CD8-positive, alpha-beta T cell (primary cell): ENCODE measurements at regions of chr10 and their contacts with region 1.

Region 1: DNA sequence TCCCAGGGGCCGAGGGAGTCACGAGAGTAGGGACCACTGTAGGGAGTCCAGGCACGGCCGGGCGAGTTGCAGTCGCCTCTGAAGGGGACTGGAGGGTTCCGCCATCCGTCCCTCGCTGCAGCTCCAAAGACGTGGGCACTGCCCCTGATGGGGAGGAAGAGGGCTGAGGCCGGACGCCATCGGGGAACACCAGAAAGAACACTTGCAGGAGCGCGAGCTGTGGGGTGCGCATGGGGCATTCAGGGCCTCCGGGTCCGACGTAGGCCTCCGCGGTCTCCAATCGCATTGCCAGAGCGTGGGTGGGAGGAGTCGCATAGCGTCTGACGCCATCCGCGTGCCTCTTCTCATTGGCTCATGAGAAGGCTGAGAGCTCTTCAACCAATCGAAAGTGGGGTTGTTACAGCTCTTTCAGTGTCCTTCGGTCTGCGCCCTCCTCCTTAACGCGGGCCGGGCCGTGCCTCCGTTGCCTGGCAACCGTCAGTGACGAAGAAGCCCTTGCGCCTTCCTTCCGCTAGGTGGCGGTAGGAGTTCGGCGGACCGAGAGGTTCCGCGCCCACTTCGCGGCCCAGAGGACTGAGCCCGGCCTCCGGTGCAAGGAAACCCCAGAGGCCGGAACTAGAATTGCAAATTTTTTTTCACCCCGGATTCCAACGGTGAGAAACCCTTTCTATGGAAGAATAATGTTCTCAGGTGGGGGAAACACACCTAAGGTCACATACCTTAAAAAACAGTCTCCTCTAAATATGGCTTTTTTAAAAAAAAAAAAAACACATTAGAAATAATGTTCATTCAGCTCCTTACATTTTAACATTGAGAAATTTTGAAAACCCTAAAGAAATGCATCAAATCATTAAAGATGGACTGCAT is at the start of gene TCTN3:
- DNase-seq: peak; percentile 92 to 100 (median 95)
- ATAC-seq: peak; percentile 94
- H3K4me3 ChIP-seq: peak within 1 kb of the TSS; percentile 65 to 76
- H3K4me3 Mint-ChIP-seq: peak within 1 kb of the TSS; percentile 95
- H3K27ac ChIP-seq: peak within 1 kb of the TSS; percentile 87 to 89
- H3K27ac Mint-ChIP-seq: peak within 1 kb of the TSS; percentile 96
- H3K4me1 ChIP-seq: peaks cover 24% of the 10 kb centered on the region
- H3K4me1 Mint-ChIP-seq: peaks cover 41% of the 10 kb centered on the region
- H3K27me3 ChIP-seq: no peaks in the 10 kb centered on the region
- H3K27me3 Mint-ChIP-seq: peaks cover 3% of the 10 kb centered on the region
- CTCF ChIP-seq: peak; percentile 98
- total RNA-seq, gene TCTN3: 14.3 to 15.6 TPM

Region 2: GRCh38 chr10:95487994-95488393 is 205.9 kb before region 1 on chr10:
- CTCF ChIA-PET with region 1: no interaction called
- POLR2A ChIA-PET with region 1: no interaction called
- intact Hi-C with region 1: no loop called
- DNase-seq: no peak
- ATAC-seq: no peak
- H3K4me3 ChIP-seq: no peak overlapping the region
- H3K4me3 Mint-ChIP-seq: no peak overlapping the region
- H3K27ac ChIP-seq: no peak overlapping the region
- H3K27ac Mint-ChIP-seq: no peak overlapping the region
- H3K4me1 ChIP-seq: no peaks in the 10 kb centered on the region
- H3K4me1 Mint-ChIP-seq: no peaks in the 10 kb centered on the region
- H3K27me3 ChIP-seq: peaks cover 0 to 3% of the 10 kb centered on the region in 2 experiments
- H3K27me3 Mint-ChIP-seq: no peaks in the 10 kb centered on the region
- CTCF ChIP-seq: no peak

Region 3: GRCh38 chr10:95656291-95657164 is 37.4 kb before region 1 on chr10 and contains the start of gene ALDH18A1:
- CTCF ChIA-PET with region 1: interaction called, 7 read pairs
- POLR2A ChIA-PET with region 1: interaction called, 8 read pairs
- intact Hi-C with region 1: loop called (anchors 1 to 2 kb)
- DNase-seq: peak; percentile 85 to 97 (median 91)
- ATAC-seq: peak; percentile 95
- H3K4me3 ChIP-seq: peak within 1 kb of the TSS; percentile 79 to 82
- H3K4me3 Mint-ChIP-seq: peak within 1 kb of the TSS; percentile 99
- H3K27ac ChIP-seq: peak within 1 kb of the TSS; percentile 40 to 52
- H3K27ac Mint-ChIP-seq: peak within 1 kb of the TSS; percentile 84
- H3K4me1 ChIP-seq: peaks cover 13% of the 10 kb centered on the region
- H3K4me1 Mint-ChIP-seq: peaks cover 29% of the 10 kb centered on the region
- H3K27me3 ChIP-seq: no peaks in the 10 kb centered on the region
- H3K27me3 Mint-ChIP-seq: no peaks in the 10 kb centered on the region
- CTCF ChIP-seq: no peak
- total RNA-seq, gene ALDH18A1: 8.3 to 11.4 TPM

Region 4: DNA sequence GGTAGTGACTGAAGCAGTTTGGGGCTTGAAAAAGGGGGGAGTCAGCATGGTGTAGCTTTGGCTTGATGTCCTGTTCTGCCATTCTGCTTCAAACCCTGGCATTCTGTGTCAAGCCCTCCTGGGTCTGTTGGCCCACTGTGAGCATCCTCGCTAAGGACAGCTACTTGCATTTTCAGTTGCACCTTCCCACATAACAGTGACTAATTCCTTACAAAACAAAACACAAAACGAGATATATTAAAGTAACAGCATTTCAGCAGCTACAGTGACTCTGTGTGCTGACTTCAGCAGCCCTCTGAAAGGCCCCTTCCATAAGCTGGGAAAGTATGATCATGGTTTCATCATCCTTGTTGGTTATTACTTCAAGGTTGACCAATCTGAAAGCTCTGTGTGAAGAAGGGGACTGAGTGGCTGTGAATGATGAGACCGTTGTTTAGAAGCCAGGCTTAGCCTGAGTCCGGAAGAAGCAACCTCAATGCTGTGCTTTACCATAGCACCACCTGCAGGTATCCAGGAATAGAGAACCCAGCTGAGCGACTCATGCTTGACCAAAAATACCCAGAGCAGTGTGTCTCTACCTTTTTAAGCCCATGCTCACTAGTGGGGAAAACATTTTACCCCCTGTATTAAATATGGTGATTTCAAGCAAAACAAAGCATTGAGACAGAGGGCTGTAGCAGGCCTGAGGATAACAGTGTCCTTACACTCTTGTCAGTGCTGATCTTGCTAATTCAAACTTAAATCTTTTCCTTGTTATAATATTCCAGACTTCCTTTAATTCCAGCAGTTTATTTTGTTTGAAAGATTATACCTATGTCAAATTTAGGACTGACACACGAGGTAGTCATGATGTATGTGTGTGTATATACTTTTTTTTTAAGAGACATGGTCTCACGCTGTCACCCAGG is 171.3 kb after region 1 on chr10:
- CTCF ChIA-PET with region 1: interaction called, 24 read pairs
- POLR2A ChIA-PET with region 1: interaction called, 6 read pairs
- intact Hi-C with region 1: loop called (anchors 1 kb)
- DNase-seq: peak in 7 of 9 experiments; percentile 2 to 73 (median 24)
- ATAC-seq: peak; percentile 90
- H3K4me3 ChIP-seq: no peak overlapping the region
- H3K4me3 Mint-ChIP-seq: no peak overlapping the region
- H3K27ac ChIP-seq: no peak overlapping the region
- H3K27ac Mint-ChIP-seq: no peak overlapping the region
- H3K4me1 ChIP-seq: no peaks in the 10 kb centered on the region
- H3K4me1 Mint-ChIP-seq: no peaks in the 10 kb centered on the region
- H3K27me3 ChIP-seq: no peaks in the 10 kb centered on the region
- H3K27me3 Mint-ChIP-seq: no peaks in the 10 kb centered on the region
- CTCF ChIP-seq: peak; percentile 30

Region 5: DNA sequence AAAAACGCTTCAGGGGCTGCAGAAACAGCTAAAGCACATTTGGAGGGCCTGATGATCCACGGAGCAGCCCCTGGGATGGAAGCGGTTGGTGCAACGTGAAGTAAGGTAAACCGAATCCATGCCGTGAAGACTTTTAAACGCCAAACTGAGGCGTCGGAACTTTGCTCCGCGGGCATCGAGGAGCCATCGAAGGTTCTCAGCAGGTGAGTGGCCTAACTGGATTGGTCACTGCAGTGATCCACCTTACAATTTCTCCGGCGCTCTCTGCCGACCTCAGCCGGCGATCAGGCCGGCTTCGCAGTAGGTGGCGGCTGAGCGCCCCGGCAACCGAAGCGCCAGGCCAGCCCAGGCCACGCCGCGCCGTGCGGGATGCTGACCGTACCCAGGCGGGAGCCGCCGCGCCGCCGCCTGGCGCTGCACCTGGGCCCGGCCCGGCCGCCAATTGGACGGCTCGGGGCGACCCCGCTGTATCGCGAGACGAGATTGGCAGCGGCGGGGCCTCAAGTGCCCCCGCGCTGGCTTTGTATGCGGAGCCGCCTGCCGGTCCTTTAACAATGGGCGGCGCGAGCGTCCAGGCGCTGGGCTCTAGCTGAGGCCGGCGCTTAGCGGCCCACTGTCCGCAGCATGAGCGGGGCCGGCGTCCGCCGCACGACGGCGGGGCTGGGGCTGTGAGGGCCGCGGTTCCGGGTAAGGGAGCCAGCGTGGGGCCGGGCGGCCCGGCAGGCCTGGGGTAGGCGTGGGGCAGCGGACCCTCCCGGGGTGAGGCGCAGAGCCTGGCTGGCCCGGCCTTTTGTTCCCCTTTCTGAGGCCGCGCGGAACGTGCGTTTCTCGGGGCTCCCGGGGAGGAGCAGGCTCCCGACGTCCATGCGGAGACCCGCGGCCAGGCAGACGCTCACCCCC is 349.4 kb after region 1 on chr10 and contains the start of gene CCNJ:
- CTCF ChIA-PET with region 1: no interaction called
- POLR2A ChIA-PET with region 1: no interaction called
- intact Hi-C with region 1: loop called in 1 of 2 experiments (anchors 2 kb)
- DNase-seq: peak; percentile 64 to 91 (median 82)
- ATAC-seq: peak; percentile 87
- H3K4me3 ChIP-seq: peak within 1 kb of the TSS; percentile 81 to 92
- H3K4me3 Mint-ChIP-seq: peak within 1 kb of the TSS; percentile 94
- H3K27ac ChIP-seq: peak within 1 kb of the TSS; percentile 70
- H3K27ac Mint-ChIP-seq: peak within 1 kb of the TSS; percentile 90
- H3K4me1 ChIP-seq: peaks cover 18% of the 10 kb centered on the region
- H3K4me1 Mint-ChIP-seq: peaks cover 48% of the 10 kb centered on the region
- H3K27me3 ChIP-seq: no peaks in the 10 kb centered on the region
- H3K27me3 Mint-ChIP-seq: peaks cover 5% of the 10 kb centered on the region
- CTCF ChIP-seq: no peak
- total RNA-seq, gene CCNJ: 10.0 to 10.7 TPM

Region 6: GRCh38 chr10:96292971-96293920 is 599.3 kb after region 1 on chr10:
- CTCF ChIA-PET with region 1: interaction called, 3 read pairs
- POLR2A ChIA-PET with region 1: no interaction called
- intact Hi-C with region 1: loop called in 1 of 2 experiments (anchors 10 kb)
- DNase-seq: peak in 4 of 9 experiments; percentile 10 to 51 (median 39)
- ATAC-seq: peak; percentile 54
- H3K4me3 ChIP-seq: no peak overlapping the region
- H3K4me3 Mint-ChIP-seq: no peak overlapping the region
- H3K27ac ChIP-seq: no peak overlapping the region
- H3K27ac Mint-ChIP-seq: no peak overlapping the region
- H3K4me1 ChIP-seq: peaks cover 27% of the 10 kb centered on the region
- H3K4me1 Mint-ChIP-seq: peaks cover 28% of the 10 kb centered on the region
- H3K27me3 ChIP-seq: no peaks in the 10 kb centered on the region
- H3K27me3 Mint-ChIP-seq: peaks cover 5% of the 10 kb centered on the region
- CTCF ChIP-seq: peak; percentile 63

Region 7: GRCh38 chr10:97400665-97401454 is 1707.0 kb after region 1 on chr10 and contains the start of gene RRP12:
- CTCF ChIA-PET with region 1: no interaction called
- POLR2A ChIA-PET with region 1: no interaction called
- intact Hi-C with region 1: loop called in 1 of 2 experiments (anchors 10 kb)
- DNase-seq: peak; percentile 65 to 99 (median 81)
- ATAC-seq: peak; percentile 93
- H3K4me3 ChIP-seq: peak within 1 kb of the TSS; percentile 69 to 88
- H3K4me3 Mint-ChIP-seq: peak within 1 kb of the TSS; percentile 98
- H3K27ac ChIP-seq: peak within 1 kb of the TSS; percentile 93 to 95
- H3K27ac Mint-ChIP-seq: peak within 1 kb of the TSS; percentile 96
- H3K4me1 ChIP-seq: peaks cover 14% of the 10 kb centered on the region
- H3K4me1 Mint-ChIP-seq: peaks cover 16% of the 10 kb centered on the region
- H3K27me3 ChIP-seq: no peaks in the 10 kb centered on the region
- H3K27me3 Mint-ChIP-seq: no peaks in the 10 kb centered on the region
- CTCF ChIP-seq: no peak
- total RNA-seq, gene RRP12: 104 to 107 TPM